HCT116 (cell line): ENCODE measurements at regions of chr3 and their contacts with region 1.

Region 1: GRCh38 chr3:8095724-8096123 is 405.9 kb upstream of the LMCD1 start:
- DNase-seq: peak; percentile 34
- ATAC-seq: peak; percentile 96
- H3K4me3 ChIP-seq: no peak overlapping the region
- H3K27ac ChIP-seq: no peak overlapping the region
- H3K4me1 ChIP-seq: peaks cover 2 to 5% of the 10 kb centered on the region in 2 experiments; a peak in 1 of 4 replicates
- H3K27me3 ChIP-seq: no peaks in the 10 kb centered on the region
- CTCF ChIP-seq: peak; percentile 28 to 48 (median 47); a peak in 5 of 6 replicates
- POLR2A ChIP-seq: no peak
- RAD21 ChIP-seq: peak; percentile 45

Region 2: GRCh38 chr3:7588236-7588635 is 507.5 kb before region 1 on chr3:
- CTCF ChIA-PET with region 1: no interaction called
- POLR2A ChIA-PET with region 1: no interaction called
- RAD21 ChIA-PET with region 1: no interaction called
- intact Hi-C with region 1: no loop called
- DNase-seq: no peak
- ATAC-seq: no peak
- H3K4me3 ChIP-seq: no peak overlapping the region
- H3K27ac ChIP-seq: no peak overlapping the region
- H3K4me1 ChIP-seq: no peaks in the 10 kb centered on the region
- H3K27me3 ChIP-seq: no peaks in the 10 kb centered on the region
- CTCF ChIP-seq: no peak
- POLR2A ChIP-seq: no peak
- RAD21 ChIP-seq: no peak

Region 3: GRCh38 chr3:7800006-7800780 is 295.5 kb before region 1 on chr3:
- CTCF ChIA-PET with region 1: interaction called, 12 read pairs
- POLR2A ChIA-PET with region 1: no interaction called
- RAD21 ChIA-PET with region 1: interaction called in 1 of 2 experiments, 3 read pairs
- intact Hi-C with region 1: loop called (anchors 5 kb)
- DNase-seq: no peak
- ATAC-seq: peak; percentile 62
- H3K4me3 ChIP-seq: no peak overlapping the region
- H3K27ac ChIP-seq: no peak overlapping the region
- H3K4me1 ChIP-seq: no peaks in the 10 kb centered on the region
- H3K27me3 ChIP-seq: no peaks in the 10 kb centered on the region
- CTCF ChIP-seq: peak; percentile 27 to 52 (median 48); a peak in 4 of 6 replicates
- POLR2A ChIP-seq: no peak
- RAD21 ChIP-seq: peak; percentile 71

Region 4: DNA sequence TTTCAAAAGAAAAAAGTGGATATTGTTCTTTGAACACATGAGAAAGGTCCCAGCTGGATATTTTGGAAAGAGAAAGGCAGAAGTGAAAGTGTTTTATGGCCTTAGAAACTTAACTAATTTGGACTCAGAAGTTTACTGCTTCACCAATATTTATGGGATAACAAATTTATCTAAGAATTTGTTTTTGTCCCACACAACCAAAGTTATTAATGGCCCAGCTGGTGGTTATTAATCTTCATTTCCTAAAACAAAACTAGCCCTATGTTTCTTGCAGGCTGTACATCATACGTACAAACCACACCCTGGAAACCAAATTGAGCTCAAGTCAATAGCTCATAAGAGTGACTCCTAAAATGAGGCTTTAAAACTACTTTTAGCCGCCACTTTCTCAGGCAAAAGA is 33.0 kb after region 1 on chr3:
- CTCF ChIA-PET with region 1: no interaction called
- POLR2A ChIA-PET with region 1: no interaction called
- RAD21 ChIA-PET with region 1: no interaction called
- intact Hi-C with region 1: no loop called
- DNase-seq: no peak
- ATAC-seq: no peak
- H3K4me3 ChIP-seq: no peak overlapping the region
- H3K27ac ChIP-seq: no peak overlapping the region
- H3K4me1 ChIP-seq: no peaks in the 10 kb centered on the region
- H3K27me3 ChIP-seq: no peaks in the 10 kb centered on the region
- CTCF ChIP-seq: no peak
- POLR2A ChIP-seq: no peak
- RAD21 ChIP-seq: no peak

Region 5: GRCh38 chr3:8416965-8417364 is 321.2 kb after region 1 on chr3:
- CTCF ChIA-PET with region 1: interaction called, 11 read pairs
- POLR2A ChIA-PET with region 1: no interaction called
- RAD21 ChIA-PET with region 1: interaction called in 1 of 2 experiments, 3 read pairs
- intact Hi-C with region 1: no loop called
- DNase-seq: peak; percentile 6
- ATAC-seq: peak; percentile 90
- H3K4me3 ChIP-seq: no peak overlapping the region
- H3K27ac ChIP-seq: no peak overlapping the region
- H3K4me1 ChIP-seq: peaks cover 3 to 4% of the 10 kb centered on the region in 2 experiments; a peak in 2 of 4 replicates
- H3K27me3 ChIP-seq: no peaks in the 10 kb centered on the region; the same call in 1 of the 2 replicates
- CTCF ChIP-seq: no peak
- POLR2A ChIP-seq: no peak
- RAD21 ChIP-seq: no peak